Aorta (tissue), 5 donors: ENCODE measurements at regions of chr19 and their contacts with region 1.

Region 1: DNA sequence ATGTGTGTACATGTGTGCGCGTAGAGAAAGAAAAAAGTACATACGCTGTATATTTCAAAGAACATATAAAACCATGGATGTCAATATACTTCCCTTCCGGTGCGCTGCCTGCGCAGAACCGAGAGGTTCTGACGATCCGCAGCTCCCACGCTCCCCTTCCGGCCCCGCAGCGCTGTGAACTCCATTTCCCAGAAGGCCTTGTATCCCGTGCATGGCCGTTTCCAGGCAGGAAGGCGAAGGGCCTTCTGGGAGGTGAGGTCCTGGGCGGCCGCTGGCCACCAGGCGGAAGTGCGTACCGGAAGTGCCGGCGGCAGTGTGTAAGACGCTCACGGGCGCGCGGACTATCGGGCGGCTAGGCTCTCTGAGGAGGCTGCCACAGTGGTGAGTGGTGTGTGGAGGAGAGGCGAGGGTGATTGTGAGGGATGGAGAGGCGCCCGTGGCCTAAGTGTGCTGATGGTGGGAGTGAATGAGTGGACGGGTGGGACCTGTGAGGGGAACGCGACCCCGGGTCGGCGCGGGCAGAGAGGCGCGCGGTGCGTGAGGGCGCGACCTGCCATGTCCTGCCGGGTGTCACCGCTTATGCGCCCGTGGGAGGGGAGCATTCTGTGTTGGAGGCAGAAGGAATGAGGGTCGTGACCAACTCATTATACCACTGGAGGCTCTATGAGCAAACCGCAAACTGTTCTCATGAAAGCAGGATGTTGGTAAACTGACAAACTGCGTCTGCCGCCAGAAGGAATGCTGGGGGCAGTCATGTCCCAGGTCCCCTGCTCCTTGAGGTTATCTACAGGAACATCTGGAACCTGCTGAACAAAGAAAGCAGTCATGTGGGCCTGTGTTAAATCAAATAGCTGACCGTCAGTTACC is at the start of gene ERVK3-1:
- DNase-seq: peak; percentile 98 to 99
- ATAC-seq: peak; percentile 99
- H3K4me3 ChIP-seq: peak within 1 kb of the TSS; percentile 76 to 85
- H3K27ac ChIP-seq: peak within 1 kb of the TSS; percentile 52 to 66
- H3K4me1 ChIP-seq: peaks cover 0 to 6% of the 10 kb centered on the region in 2 donors
- H3K27me3 ChIP-seq: no peaks in the 10 kb centered on the region
- total RNA-seq, gene ERVK3-1: 33.6 to 34.3 TPM

Region 2: DNA sequence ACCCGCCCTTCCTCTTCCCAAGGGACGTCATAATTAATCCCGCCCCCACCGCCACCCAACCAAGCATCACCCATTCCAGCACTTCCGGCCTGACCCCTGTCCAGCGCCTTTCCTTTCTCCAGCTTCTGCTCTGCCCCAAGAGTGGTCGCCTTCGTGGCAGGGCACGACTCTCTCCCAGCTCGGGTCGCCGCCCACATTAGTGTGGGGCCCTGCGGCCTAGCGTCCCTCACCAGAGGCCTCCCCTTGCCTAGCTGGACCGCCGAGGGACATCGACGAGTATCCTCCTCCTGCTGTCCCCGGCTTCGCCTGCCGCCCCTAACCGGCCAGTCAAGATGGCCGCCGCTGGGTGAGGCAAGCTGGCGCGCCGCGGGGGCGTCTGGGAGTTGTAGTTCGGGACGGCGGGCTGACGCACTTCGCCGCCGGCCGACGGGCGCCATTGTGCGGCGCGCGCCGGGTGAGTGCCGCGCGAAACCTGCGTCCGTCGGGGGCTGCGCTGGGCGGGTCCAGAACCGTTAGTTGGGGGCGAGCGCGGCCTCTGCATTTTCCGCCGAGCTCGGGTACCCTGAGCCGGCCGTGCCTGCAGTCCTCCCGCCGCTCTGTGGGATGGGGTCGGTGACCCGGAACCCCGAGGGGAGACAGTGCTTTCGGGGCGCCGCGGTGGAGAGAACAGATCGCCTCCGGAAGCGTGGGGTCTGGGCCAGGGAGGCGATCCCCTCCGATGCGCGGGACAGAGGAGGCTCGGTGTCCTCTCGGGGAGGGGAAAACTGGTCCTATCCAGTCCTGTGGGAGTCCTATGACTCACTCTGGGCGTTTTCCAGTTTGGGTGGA is 122.1 kb before region 1 on chr19 and contains the start of gene ZNF274:
- intact Hi-C with region 1: loop called in 1 of 2 experiments (anchors 5 kb)
- DNase-seq: peak; percentile 96 to 98
- ATAC-seq: peak; percentile 98
- H3K4me3 ChIP-seq: peak within 1 kb of the TSS; percentile 55 to 74
- H3K27ac ChIP-seq: peak within 1 kb of the TSS; percentile 6 to 85
- H3K4me1 ChIP-seq: no peaks in the 10 kb centered on the region
- H3K27me3 ChIP-seq: no peaks in the 10 kb centered on the region
- total RNA-seq, gene ZNF274: 25.5 to 26.0 TPM

Region 3: DNA sequence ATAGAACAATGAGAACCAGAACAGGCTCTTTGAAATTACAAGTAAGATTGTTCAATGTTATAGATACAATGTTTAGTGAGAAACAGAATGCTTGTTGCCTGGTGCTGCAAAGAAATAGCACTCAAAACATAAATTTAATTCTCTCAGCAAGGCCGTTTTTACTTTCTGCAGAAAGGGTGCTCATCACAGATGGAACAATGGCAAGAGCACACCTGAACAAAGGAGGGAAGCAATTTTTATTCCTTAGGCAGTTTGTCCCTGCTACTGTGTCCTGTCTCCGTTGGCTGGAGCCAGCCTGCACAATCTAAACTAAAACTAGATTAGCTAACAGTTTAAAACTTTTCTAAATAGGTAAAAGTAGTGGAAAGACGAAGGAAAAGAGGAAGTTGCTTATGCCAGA is 37.0 kb before region 1 on chr19:
- intact Hi-C with region 1: no loop called
- DNase-seq: no peak
- ATAC-seq: no peak
- H3K4me3 ChIP-seq: no peak overlapping the region
- H3K27ac ChIP-seq: no peak overlapping the region
- H3K4me1 ChIP-seq: no peaks in the 10 kb centered on the region
- H3K27me3 ChIP-seq: no peaks in the 10 kb centered on the region

Region 4: GRCh38 chr19:58278157-58279041 is 26.9 kb before region 1 on chr19 and contains the start of gene ZNF8:
- intact Hi-C with region 1: loop called (anchors 2 kb)
- DNase-seq: peak; percentile 99
- ATAC-seq: peak; percentile 97
- H3K4me3 ChIP-seq: peak within 1 kb of the TSS; percentile 58 to 84
- H3K27ac ChIP-seq: peak within 1 kb of the TSS in 1 of 2 donors; percentile 48
- H3K4me1 ChIP-seq: peaks cover 2 to 3% of the 10 kb centered on the region in 2 donors
- H3K27me3 ChIP-seq: no peaks in the 10 kb centered on the region
- total RNA-seq, gene ZNF8: 5.9 to 7.8 TPM

Region 5: DNA sequence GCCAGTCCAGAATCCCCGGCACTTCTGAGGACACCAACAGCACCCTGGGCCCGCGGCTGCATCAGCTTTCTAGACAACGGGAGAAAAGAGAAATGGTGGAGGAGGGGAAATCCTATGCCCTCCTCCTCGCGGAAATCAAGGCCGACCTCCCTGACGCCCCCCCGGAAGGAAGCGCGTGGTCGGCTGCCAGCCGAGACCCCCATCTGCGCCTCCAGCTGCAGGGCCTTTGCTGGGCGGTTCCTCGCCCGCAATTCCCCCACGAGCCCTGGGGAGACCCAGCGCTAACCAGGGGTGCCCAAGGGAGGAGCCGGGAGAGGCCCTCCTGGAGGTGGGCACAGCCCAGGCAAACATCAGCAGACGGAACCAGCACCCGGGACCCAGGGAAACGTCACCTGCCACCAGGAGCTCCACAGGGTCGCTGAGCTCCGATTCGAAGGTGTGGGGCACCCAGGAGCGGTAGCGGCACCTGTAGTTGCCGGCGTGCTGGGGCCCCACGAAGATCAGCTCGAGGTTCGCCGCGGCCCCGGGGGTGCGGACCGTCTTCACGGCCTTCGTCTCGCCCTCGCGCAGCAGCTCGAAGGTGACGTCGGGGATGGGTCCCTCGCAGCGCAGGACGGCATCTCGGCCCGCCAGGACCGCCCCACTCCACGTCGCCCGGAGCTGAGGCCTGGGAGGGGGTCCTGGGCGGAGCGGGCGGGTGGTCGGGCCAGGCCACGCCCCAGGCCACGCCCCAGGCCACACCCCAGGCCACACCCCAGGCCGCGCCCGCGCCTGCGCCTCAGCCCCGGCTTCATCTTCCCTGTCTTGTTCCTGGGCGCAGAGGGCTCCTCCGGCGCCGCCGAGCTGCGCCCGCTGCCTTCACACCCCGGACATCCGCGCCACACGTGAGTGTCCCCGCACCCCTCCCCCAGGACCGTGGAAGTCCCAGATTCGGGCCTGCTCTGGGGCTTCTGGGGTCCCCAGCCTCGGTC is 41.9 kb after region 1 on chr19:
- intact Hi-C with region 1: no loop called
- DNase-seq: peak; percentile 76 to 81
- ATAC-seq: peak; percentile 93
- H3K4me3 ChIP-seq: peak overlapping the region in 1 of 2 donors; percentile 48
- H3K27ac ChIP-seq: no peak overlapping the region
- H3K4me1 ChIP-seq: no peaks in the 10 kb centered on the region
- H3K27me3 ChIP-seq: no peaks in the 10 kb centered on the region